A673 (cell line): ENCODE measurements at regions of chr13 and their contacts with region 1.

Region 1: DNA sequence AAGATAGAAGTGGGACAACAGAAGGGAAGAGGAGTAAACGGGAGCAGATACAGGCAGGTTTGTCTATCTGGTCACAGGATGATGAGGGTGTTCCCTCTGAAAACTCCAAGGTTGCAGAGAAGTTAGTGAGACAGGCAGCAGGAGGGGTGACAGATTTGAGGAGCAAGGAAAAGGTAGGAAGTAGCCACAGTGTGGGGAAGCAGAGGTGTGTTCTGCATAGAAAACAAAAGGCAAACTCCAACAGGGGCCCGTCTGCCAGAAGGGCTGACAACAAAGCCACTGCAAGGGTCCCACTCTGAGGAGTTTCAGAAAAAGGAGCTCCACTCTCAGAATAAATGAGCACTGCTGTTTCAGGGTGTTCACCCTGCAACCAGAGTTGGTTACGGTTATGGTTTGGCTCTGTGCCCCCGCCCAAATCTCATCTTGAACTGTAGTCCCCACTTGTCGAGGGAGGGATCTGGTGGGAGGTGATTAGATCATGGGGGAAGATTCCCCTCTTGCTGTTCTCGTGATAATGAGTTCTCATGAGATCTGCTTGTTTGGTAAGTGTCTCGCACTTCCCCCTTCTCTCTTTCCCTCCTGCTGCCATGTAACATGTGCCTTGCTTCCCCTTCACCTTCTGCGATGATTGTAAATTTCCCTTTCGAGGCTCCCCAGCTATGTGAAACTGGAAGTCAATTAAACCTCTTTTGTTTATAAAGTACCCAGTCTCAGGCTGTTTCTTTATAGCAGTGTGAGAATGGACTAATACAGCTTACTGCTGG is 32.1 kb downstream of the SMAD9 start:
- DNase-seq: no peak
- H3K4me3 ChIP-seq: no peak overlapping the region
- H3K27ac ChIP-seq: no peak overlapping the region
- H3K4me1 ChIP-seq: peaks cover 30% of the 10 kb centered on the region
- H3K27me3 ChIP-seq: no peaks in the 10 kb centered on the region
- CTCF ChIP-seq: no peak

Region 2: GRCh38 chr13:36801035-36801434 is 86.9 kb before region 1 on chr13:
- CTCF ChIA-PET with region 1: interaction called, 10 read pairs
- POLR2A ChIA-PET with region 1: no interaction called
- intact Hi-C with region 1: no loop called
- DNase-seq: no peak
- H3K4me3 ChIP-seq: no peak overlapping the region
- H3K27ac ChIP-seq: no peak overlapping the region
- H3K4me1 ChIP-seq: no peaks in the 10 kb centered on the region
- H3K27me3 ChIP-seq: no peaks in the 10 kb centered on the region
- CTCF ChIP-seq: no peak